ENCODE measurements at regions of chr22 and their contacts with region 1.

Region 1: GRCh38 chr22:30005213-30005857 is 74.9 kb upstream of the HORMAD2 start:
- DNase-seq: peak; percentile 66 to 69
- ATAC-seq: peak; percentile 79 to 93 (median 91)
- H3K4me3 ChIP-seq: no peak overlapping the region
- H3K27ac ChIP-seq: peak overlapping the region in 3 of 10 donors; percentile 5 to 27 (median 23)
- H3K4me1 ChIP-seq: peaks cover 3 to 16% (median 12%) of the 10 kb centered on the region in 9 donors
- H3K27me3 ChIP-seq: no peaks in the 10 kb centered on the region
- CTCF ChIP-seq: peak; percentile 80 to 98 (median 96)

Region 2: GRCh38 chr22:29635734-29636357 is 369.5 kb before region 1 on chr22:
- intact Hi-C with region 1: loop called in 1 of 10 experiments (anchors 5 kb)
- DNase-seq: no peak
- ATAC-seq: peak in 3 of 8 donors; percentile 44 to 63 (median 48)
- H3K4me3 ChIP-seq: no peak overlapping the region
- H3K27ac ChIP-seq: no peak overlapping the region
- H3K4me1 ChIP-seq: peaks cover 0 to 33% (median 4%) of the 10 kb centered on the region in 9 donors
- H3K27me3 ChIP-seq: no peaks in the 10 kb centered on the region
- CTCF ChIP-seq: peak; percentile 15 to 71 (median 56)

Region 3: DNA sequence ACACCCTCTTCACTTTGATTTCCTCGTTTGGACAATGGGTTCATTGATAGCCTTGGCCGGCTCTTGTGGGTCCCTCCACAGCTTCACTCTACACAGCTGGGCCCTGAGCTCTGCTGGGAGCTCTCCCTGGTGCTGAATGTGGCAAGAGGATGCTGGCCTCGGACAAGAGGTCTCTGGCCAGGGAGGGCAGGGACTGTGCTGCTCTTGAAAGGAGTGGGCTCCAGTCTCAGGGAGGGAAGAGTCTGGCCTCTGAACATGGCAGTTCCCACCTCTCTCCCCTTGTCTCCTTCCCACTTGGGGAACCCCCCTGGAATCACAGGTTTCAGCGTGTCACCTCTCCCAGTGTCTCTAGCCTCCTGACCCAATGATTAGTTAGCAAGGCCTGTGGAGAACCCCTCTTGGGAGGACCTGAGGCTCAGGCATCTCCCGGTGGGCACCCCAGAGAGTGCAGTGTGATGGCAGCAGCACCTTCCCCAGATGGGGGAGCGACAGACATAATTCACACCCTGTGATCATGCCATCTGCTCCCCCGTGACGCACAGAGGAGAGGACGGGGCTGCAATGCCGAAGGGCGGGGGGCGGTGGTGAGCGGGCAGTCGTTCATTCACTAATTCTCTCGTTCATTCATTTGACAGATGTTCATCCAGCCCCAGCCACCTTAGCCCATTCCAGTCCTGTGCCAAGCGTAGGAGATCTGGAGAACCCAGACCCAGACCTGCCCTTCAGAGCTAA is 288.4 kb before region 1 on chr22:
- intact Hi-C with region 1: loop called in 1 of 10 experiments (anchors 10 kb)
- DNase-seq: peak; percentile 54 to 56
- ATAC-seq: peak; percentile 56 to 83 (median 70)
- H3K4me3 ChIP-seq: no peak overlapping the region
- H3K27ac ChIP-seq: no peak overlapping the region
- H3K4me1 ChIP-seq: peaks cover 0 to 3% (median 0%) of the 10 kb centered on the region in 9 donors
- H3K27me3 ChIP-seq: peaks cover 16 to 67% (median 53%) of the 10 kb centered on the region in 7 donors
- CTCF ChIP-seq: no peak

Region 4: DNA sequence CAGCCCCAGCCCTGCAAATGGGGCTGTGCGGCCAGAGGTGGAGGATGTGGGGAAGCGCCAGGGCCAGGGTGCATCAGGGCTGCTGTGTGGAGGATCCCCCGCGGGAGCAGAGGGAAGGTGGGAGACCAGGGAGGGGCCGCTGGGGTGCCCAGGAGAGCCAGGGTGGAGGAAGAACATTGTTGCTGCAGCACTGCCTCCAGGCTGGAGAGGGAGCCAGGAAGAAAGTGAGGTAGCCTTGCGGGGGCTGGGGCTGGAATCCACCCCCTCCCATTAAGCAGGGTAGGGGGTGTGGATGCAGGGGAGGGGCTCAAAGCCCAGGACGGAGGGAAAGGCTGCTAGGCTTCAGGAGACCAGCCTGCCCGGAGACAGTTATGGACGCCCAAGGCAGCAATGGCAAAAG is 270.5 kb before region 1 on chr22:
- intact Hi-C with region 1: no loop called
- DNase-seq: no peak
- ATAC-seq: no peak
- H3K4me3 ChIP-seq: no peak overlapping the region
- H3K27ac ChIP-seq: no peak overlapping the region
- H3K4me1 ChIP-seq: peaks cover 0 to 11% (median 0%) of the 10 kb centered on the region in 9 donors
- H3K27me3 ChIP-seq: no peaks in the 10 kb centered on the region
- CTCF ChIP-seq: no peak

Region 5: GRCh38 chr22:29772170-29772641 is 233.1 kb before region 1 on chr22:
- intact Hi-C with region 1: loop called in 6 of 10 experiments (anchors 5 to 10 kb)
- DNase-seq: no peak
- ATAC-seq: peak in 2 of 8 donors; percentile 7 to 30
- H3K4me3 ChIP-seq: no peak overlapping the region
- H3K27ac ChIP-seq: peak overlapping the region in 1 of 10 donors; percentile 21
- H3K4me1 ChIP-seq: peaks cover 3 to 36% (median 25%) of the 10 kb centered on the region in 9 donors
- H3K27me3 ChIP-seq: no peaks in the 10 kb centered on the region
- CTCF ChIP-seq: peak in 4 of 9 donors; percentile 38 to 43 (median 40)

Region 6: DNA sequence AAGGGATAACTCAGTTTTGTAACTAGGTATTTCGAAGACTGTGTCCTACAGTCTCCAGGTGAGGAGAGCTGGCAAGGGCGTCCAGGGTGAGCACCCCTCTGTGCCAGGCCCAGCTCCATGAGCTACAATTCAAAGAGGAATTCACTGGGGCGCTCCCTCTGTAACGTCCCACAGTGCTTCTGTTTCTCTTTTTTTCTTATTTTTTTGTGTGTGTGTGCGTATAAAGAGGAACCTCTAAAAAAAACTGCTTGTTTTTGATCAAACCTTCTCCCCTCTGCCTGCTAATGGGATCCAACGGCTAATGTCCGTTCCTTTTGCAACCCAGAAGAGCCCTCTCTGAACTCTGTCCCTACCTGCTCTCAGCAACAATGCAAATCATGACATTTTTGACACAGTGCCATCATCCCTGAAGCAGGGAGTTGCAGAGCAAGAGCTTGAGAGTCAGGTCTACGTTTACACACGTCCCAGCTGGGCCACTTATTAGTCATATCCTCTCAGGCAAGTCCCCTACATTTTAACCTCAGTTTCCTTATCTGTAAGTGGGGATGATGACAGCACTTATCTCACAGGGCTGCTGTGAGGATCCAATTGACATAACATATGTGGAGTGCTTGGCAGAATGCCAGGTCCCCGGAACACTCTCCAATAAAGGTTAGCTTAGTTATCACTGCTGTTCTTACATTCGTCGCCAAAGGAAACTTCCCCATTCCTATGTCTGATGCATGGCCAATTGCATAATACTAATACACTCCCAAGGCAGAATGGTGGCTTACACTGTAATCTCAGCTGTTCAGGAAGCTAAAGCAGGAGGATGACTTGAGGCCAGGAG is 184.2 kb before region 1 on chr22:
- intact Hi-C with region 1: loop called in 2 of 10 experiments (anchors 5 to 10 kb)
- DNase-seq: peak; percentile 81 to 83
- ATAC-seq: peak; percentile 77 to 96 (median 86)
- H3K4me3 ChIP-seq: no peak overlapping the region
- H3K27ac ChIP-seq: peak overlapping the region in 9 of 10 donors; percentile 29 to 74 (median 53)
- H3K4me1 ChIP-seq: peaks cover 16 to 42% (median 35%) of the 10 kb centered on the region in 9 donors
- H3K27me3 ChIP-seq: no peaks in the 10 kb centered on the region
- CTCF ChIP-seq: no peak

Region 7: DNA sequence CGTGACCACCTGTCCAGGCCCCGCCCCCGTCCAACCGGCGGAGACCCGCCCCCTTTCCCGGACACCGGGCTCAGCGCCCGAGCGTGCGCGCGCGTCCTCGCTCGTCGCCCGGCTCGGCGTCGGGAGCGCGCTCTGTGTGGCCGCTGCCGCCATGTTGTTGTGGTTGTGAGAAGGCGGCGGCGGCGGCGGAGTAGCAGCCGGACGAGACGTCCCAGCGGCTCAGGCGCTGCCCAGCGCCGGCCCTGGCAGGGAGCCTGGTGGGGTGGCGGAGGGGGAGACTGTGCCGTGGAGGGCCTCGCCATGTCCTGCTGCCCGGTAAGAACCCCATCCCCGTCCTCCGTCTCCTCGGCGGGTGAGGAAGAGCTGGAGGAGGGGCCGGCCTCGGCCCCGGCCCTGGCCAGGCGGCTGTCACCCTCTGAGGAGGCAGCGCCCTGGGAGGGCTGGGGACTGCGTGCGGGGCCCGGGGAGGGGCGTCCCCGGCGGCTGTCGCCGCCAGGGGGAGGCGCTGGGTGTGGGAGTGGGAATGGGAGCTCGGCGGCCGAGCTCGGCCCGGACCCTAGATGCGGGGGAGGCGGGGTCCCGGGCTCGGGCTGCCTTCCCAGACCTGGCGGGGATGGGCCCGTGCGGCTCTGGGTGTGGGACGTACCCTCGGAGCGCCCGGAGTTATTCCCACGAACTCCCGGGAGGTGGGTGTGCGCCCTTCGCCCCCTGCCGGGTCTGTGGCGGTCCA is 122.1 kb before region 1 on chr22 and contains the start of gene MTMR3:
- intact Hi-C with region 1: loop called in 7 of 10 experiments (anchors 5 to 10 kb)
- DNase-seq: peak; percentile 94 to 96
- ATAC-seq: peak; percentile 90 to 97 (median 94)
- H3K4me3 ChIP-seq: peak within 1 kb of the TSS; percentile 68 to 99 (median 95)
- H3K27ac ChIP-seq: peak within 1 kb of the TSS; percentile 86 to 100 (median 98)
- H3K4me1 ChIP-seq: peaks cover 11 to 50% (median 46%) of the 10 kb centered on the region in 9 donors
- H3K27me3 ChIP-seq: no peaks in the 10 kb centered on the region
- CTCF ChIP-seq: peak in 8 of 9 donors; percentile 8 to 70 (median 54)
- total RNA-seq, gene MTMR3: 26.1 to 42.9 (median 36.5) TPM

Measured in heart right ventricle (tissue), 16 donors.